GM12878 (cell line): ENCODE measurements at regions of chr11 and their contacts with region 1.

Region 1: GRCh38 chr11:120391292-120391691 is 55.1 kb downstream of the ARHGEF12 start:
- DNase-seq: no peak
- ATAC-seq: peak; percentile 52
- H3K4me3 ChIP-seq: no peak overlapping the region
- H3K27ac ChIP-seq: no peak overlapping the region
- H3K4me1 ChIP-seq: no peaks in the 10 kb centered on the region; the same call in 1 of the 2 replicates
- H3K27me3 ChIP-seq: no peaks in the 10 kb centered on the region
- CTCF ChIP-seq: no peak
- EP300 ChIP-seq: no peak
- POLR2A ChIP-seq: no peak
- RAD21 ChIP-seq: no peak

Region 2: GRCh38 chr11:120410622-120411380 is 19.5 kb after region 1 on chr11:
- CTCF ChIA-PET with region 1: interaction called, 7 read pairs
- POLR2A ChIA-PET with region 1: interaction called, 3 read pairs
- RAD21 ChIA-PET with region 1: interaction called, 6 read pairs
- SMC1A ChIA-PET with region 1: interaction called, 11 read pairs
- in situ Hi-C with region 1: no loop called
- intact Hi-C with region 1: no loop called
- DNase-seq: no peak
- ATAC-seq: no peak
- H3K4me3 ChIP-seq: no peak overlapping the region
- H3K27ac ChIP-seq: no peak overlapping the region
- H3K4me1 ChIP-seq: no peaks in the 10 kb centered on the region
- H3K27me3 ChIP-seq: no peaks in the 10 kb centered on the region
- CTCF ChIP-seq: no peak
- EP300 ChIP-seq: no peak
- POLR2A ChIP-seq: no peak
- RAD21 ChIP-seq: no peak